ENCODE measurements at regions of chr19 and their contacts with region 1.

Region 1: GRCh38 chr19:43595999-43596841 is at the starts of genes IRGQ and ZNF576:
- DNase-seq: peak; percentile 100
- ATAC-seq: peak; percentile 88
- H3K4me3 Mint-ChIP-seq: peak within 1 kb of the TSS; percentile 94
- H3K27ac Mint-ChIP-seq: peak within 1 kb of the TSS; percentile 90
- H3K4me1 Mint-ChIP-seq: peaks cover 29% of the 10 kb centered on the region
- H3K27me3 Mint-ChIP-seq: no peaks in the 10 kb centered on the region
- total RNA-seq, gene IRGQ: 12.9 to 23.0 TPM
- total RNA-seq, gene ZNF576: 18.6 to 21.3 TPM

Region 2: GRCh38 chr19:43433358-43433673 is 162.9 kb before region 1 on chr19:
- CTCF ChIA-PET with region 1: interaction called, 19 read pairs
- DNase-seq: no peak
- ATAC-seq: no peak
- H3K4me3 Mint-ChIP-seq: no peak overlapping the region
- H3K27ac Mint-ChIP-seq: no peak overlapping the region
- H3K4me1 Mint-ChIP-seq: peaks cover 18% of the 10 kb centered on the region
- H3K27me3 Mint-ChIP-seq: no peaks in the 10 kb centered on the region

Region 3: DNA sequence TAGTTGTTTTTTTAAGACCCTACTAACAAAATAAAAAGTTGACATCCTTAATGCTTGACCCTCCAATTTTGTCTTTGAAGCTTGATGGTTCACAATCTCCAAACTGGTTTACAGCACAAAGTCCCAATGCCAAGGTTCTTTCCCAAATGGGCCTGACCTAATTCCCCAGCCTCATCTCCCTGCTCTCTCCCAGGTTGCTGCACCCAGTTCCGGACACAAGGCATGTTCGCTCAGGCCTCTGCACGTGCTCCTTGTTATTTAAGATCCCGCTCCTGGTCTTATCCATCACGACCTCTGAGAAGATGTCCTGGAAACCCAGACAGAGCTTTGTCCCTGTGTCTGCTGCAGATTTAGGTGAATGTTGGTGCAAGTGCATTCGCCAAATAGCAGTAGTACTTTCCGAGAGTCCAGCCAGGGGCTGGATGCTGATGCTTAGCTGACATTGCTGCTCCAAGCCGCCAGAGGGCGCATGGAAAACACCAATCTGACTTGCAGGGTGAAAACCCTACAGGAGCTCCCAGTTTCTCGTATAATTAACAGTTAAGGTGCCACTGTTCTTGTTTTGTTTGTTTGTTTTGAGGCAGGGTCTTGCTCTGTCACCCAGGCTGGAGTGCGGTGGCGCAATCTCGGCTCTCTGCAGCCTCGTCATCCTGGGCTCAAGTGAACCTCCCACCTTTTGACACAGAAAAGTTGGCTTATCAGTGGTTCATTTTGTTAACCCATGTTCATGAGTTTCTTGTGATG is 149.3 kb before region 1 on chr19:
- CTCF ChIA-PET with region 1: interaction called, 31 read pairs
- DNase-seq: peak; percentile 82
- ATAC-seq: peak; percentile 76
- H3K4me3 Mint-ChIP-seq: no peak overlapping the region
- H3K27ac Mint-ChIP-seq: no peak overlapping the region
- H3K4me1 Mint-ChIP-seq: peaks cover 16% of the 10 kb centered on the region
- H3K27me3 Mint-ChIP-seq: no peaks in the 10 kb centered on the region

Region 4: DNA sequence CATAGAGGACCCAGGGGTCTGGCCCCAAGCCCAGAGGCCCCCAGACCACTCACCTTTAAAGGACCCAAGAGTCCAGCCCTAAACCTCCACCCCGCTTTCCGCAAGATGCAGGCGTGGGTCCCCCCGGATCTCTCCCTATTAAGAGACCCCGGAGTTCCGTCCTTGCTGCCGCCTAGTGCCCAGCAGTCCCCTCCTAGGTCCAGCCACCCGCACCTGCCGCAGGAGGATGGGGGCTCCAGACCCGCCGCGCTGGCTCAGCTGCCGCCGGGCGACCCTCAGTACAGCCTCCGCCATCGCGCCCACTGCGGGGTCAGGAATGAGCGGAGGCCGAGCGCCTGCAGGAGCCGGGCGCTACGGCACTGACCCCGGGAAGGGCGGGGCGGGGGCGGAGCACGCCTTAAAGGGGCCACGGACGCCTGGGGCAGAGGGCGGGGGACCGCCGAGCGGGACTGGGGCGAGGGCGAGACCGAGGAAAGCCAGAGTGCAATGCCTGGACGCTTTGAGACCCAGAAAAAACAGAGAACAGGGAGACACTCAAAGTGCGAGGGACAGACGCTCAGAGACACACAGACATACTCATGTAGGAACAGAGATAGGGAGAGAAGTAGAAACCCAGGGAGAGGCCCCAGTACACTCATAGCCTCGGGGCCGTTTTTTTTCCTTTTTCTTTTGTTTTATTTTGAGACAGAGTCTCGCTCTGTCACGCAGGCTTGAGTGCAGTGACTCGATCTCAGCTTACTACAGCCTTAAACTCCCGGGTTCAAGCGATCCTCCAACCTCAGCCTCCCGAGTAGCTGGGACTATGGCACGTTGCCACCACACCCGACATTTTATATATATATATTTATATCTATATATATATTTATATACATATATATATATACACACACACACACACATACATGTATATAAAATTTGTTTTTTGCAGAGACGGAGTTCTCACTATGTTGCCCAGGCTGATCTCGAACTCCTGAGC is 69.0 kb before region 1 on chr19 and contains the start of gene ETHE1:
- CTCF ChIA-PET with region 1: interaction called, 111 read pairs
- DNase-seq: peak; percentile 88
- ATAC-seq: peak; percentile 96
- H3K4me3 Mint-ChIP-seq: peak within 1 kb of the TSS; percentile 89
- H3K27ac Mint-ChIP-seq: peak within 1 kb of the TSS; percentile 93
- H3K4me1 Mint-ChIP-seq: peaks cover 24% of the 10 kb centered on the region
- H3K27me3 Mint-ChIP-seq: no peaks in the 10 kb centered on the region
- total RNA-seq, gene ETHE1: 52.6 to 55.8 TPM

Region 5: DNA sequence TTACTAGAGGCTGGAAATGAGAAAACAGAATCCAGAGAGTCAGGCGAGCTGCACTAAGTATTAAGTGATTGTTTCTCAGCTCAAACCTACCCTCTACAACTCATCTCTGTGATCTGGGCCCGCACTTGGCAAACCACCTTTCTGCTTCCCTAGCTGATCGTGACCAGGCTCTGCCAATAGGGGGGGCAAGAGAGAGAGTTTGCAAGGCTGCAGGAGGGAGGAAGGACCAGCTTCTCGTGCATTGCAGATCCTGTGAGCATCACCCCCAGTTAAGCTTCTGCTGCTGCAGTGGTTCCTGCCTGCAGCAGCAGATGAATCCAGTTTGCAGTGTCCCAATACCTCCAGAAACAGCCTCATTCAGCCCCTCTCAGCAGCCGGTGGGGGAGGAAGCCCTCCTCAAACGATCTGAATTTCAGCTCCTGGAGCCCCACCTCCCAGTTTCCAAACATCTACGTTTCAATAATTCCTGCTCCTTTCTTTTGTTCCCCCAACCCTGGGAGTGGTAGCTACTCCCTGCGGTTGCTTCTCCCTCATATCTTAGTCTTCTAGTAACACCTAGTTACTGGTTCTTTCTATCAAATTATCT is 40.9 kb before region 1 on chr19:
- CTCF ChIA-PET with region 1: interaction called, 173 read pairs
- DNase-seq: peak; percentile 89
- ATAC-seq: peak; percentile 94
- H3K4me3 Mint-ChIP-seq: no peak overlapping the region
- H3K27ac Mint-ChIP-seq: peak overlapping the region; percentile 61
- H3K4me1 Mint-ChIP-seq: peaks cover 11% of the 10 kb centered on the region
- H3K27me3 Mint-ChIP-seq: no peaks in the 10 kb centered on the region

Region 6: DNA sequence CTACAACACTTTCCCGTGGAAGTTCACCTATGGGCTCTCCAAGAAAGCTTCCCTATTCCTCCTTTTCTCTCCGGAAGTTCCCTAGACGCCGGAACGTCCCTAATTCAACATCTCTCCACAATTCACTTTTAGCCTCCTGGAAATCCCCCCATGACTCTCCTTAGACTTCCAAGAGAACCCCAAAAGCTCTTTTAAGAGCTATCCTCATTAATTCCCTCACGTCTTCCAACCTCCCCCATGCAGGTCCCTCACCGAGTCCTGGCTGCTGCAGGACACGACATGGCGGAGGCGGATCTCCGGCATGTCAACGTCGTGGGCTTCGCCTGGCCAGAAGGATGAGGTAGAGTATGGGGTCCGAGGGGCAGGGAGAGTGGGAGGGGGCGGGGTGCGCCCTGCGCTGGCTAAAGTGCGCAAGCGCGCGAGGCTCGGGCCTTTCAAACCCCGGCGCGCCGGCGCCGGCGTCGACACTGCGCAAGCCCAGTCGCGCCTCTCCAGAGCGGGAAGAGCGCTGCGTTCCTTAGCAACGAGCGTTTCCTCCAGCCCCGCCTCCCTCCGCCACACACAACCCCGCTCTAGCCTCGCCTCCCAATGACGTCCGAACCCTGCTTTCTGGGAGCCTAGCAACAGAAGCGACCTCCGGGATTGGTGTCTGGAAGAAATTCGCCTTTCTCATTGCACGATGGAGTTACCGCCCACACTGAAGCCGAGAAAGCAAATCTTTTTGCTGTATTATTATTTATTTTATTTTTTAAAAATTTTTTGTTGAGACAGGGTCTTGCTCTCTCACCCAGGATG is 20.9 kb before region 1 on chr19 and contains the starts of genes PINLYP and XRCC1:
- CTCF ChIA-PET with region 1: interaction called, 53 read pairs
- DNase-seq: peak; percentile 99
- ATAC-seq: peak; percentile 97
- H3K4me3 Mint-ChIP-seq: peak within 1 kb of the TSS; percentile 95
- H3K27ac Mint-ChIP-seq: peak within 1 kb of the TSS; percentile 92
- H3K4me1 Mint-ChIP-seq: peaks cover 45% of the 10 kb centered on the region
- H3K27me3 Mint-ChIP-seq: no peaks in the 10 kb centered on the region
- total RNA-seq, gene PINLYP: 16.8 to 19.7 TPM
- total RNA-seq, gene XRCC1: 47.7 to 50.6 TPM

Region 7: GRCh38 chr19:43612374-43612773 is 16.2 kb after region 1 on chr19:
- CTCF ChIA-PET with region 1: no interaction called
- DNase-seq: no peak
- ATAC-seq: no peak
- H3K4me3 Mint-ChIP-seq: no peak overlapping the region
- H3K27ac Mint-ChIP-seq: no peak overlapping the region
- H3K4me1 Mint-ChIP-seq: no peaks in the 10 kb centered on the region
- H3K27me3 Mint-ChIP-seq: no peaks in the 10 kb centered on the region

Region 8: GRCh38 chr19:43639519-43640423 is 43.6 kb after region 1 on chr19 and contains the start of gene CADM4:
- CTCF ChIA-PET with region 1: no interaction called
- DNase-seq: no peak
- ATAC-seq: peak; percentile 83
- H3K4me3 Mint-ChIP-seq: peak within 1 kb of the TSS; percentile 69
- H3K27ac Mint-ChIP-seq: no peak within 1 kb of the TSS
- H3K4me1 Mint-ChIP-seq: peaks cover 10% of the 10 kb centered on the region
- H3K27me3 Mint-ChIP-seq: peaks cover 41% of the 10 kb centered on the region
- total RNA-seq, gene CADM4: 0.09 to 0.12 TPM

Region 9: GRCh38 chr19:43668406-43669158 is 72.4 kb after region 1 on chr19:
- CTCF ChIA-PET with region 1: interaction called, 13 read pairs
- DNase-seq: peak; percentile 99
- ATAC-seq: peak; percentile 91
- H3K4me3 Mint-ChIP-seq: peak overlapping the region; percentile 82
- H3K27ac Mint-ChIP-seq: peak overlapping the region; percentile 85
- H3K4me1 Mint-ChIP-seq: peaks cover 38% of the 10 kb centered on the region
- H3K27me3 Mint-ChIP-seq: peaks cover 12% of the 10 kb centered on the region

Region 10: GRCh38 chr19:43687660-43687997 is 91.4 kb after region 1 on chr19:
- CTCF ChIA-PET with region 1: no interaction called
- DNase-seq: no peak
- ATAC-seq: no peak
- H3K4me3 Mint-ChIP-seq: no peak overlapping the region
- H3K27ac Mint-ChIP-seq: no peak overlapping the region
- H3K4me1 Mint-ChIP-seq: no peaks in the 10 kb centered on the region
- H3K27me3 Mint-ChIP-seq: no peaks in the 10 kb centered on the region

Measured in activated CD8-positive, alpha-beta memory T cell treated with anti-CD3 and anti-CD28 coated beads, Interleukin-2, amount 10 ng/mL, durations not matched to agents 7 days and 5 days (primary cell).